Calu3 (cell line): ENCODE measurements at regions of chr19 and their contacts with region 1.

Region 1: GRCh38 chr19:48085904-48086864 is 24.4 kb downstream of the PLA2G4C start:
- DNase-seq: no peak
- H3K4me3 Mint-ChIP-seq: no peak overlapping the region
- H3K27ac Mint-ChIP-seq: no peak overlapping the region
- H3K4me1 Mint-ChIP-seq: peaks cover 7% of the 10 kb centered on the region
- H3K27me3 Mint-ChIP-seq: peaks cover 69% of the 10 kb centered on the region
- CTCF ChIP-seq: no peak

Region 2: DNA sequence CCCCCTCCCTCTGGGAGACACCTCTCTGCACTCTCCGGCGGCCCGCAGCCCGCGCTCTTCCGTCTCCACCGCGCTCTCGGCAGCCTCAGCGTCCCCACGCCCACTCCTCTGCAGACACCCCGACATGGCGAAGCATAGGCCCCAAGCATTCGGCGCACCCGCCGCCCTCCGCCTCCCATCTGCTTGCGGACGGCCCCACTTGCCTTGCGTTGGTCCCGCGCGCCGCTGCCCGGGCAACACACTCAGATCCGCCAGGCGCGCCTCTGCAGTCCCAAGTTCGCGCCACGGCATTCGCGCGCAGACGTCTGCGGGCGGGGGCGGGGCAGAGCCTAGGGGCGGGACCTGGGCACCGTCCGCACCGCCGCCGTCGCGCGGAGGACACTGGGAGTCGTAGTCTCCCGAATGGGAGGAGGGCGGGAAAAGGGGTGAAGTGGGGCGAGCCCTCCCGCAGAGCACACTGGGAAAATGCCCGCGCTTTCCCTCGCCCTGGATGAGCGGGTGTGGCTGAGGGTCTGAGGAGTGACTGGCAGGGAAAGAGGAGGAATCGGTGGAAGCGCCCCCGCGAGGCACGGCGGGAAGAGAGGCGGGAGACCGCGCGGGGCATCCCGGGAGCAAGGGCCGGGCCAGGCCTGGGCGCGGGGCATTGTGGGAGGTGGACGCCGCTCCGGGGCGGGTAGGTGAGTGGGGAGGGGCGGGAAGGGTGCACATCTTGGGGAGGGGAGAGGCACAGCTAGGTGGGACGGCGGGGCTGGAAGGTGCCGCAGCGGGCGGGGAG is 84.0 kb after region 1 on chr19 and contains the starts of genes LIG1 and ZSWIM9:
- CTCF ChIA-PET with region 1: interaction called, 11 read pairs
- intact Hi-C with region 1: no loop called
- DNase-seq: peak; percentile 98
- H3K4me3 Mint-ChIP-seq: peak within 1 kb of the TSS; percentile 97
- H3K27ac Mint-ChIP-seq: peak within 1 kb of the TSS; percentile 31
- H3K4me1 Mint-ChIP-seq: peaks cover 11% of the 10 kb centered on the region
- H3K27me3 Mint-ChIP-seq: no peaks in the 10 kb centered on the region
- CTCF ChIP-seq: no peak
- total RNA-seq, gene LIG1: 99.3 and 99.4 TPM in 2 replicates
- total RNA-seq, gene ZSWIM9: 16.4 and 17.4 TPM in 2 replicates